ENCODE measurements at regions of chr20 and their contacts with region 1.

Region 1: DNA sequence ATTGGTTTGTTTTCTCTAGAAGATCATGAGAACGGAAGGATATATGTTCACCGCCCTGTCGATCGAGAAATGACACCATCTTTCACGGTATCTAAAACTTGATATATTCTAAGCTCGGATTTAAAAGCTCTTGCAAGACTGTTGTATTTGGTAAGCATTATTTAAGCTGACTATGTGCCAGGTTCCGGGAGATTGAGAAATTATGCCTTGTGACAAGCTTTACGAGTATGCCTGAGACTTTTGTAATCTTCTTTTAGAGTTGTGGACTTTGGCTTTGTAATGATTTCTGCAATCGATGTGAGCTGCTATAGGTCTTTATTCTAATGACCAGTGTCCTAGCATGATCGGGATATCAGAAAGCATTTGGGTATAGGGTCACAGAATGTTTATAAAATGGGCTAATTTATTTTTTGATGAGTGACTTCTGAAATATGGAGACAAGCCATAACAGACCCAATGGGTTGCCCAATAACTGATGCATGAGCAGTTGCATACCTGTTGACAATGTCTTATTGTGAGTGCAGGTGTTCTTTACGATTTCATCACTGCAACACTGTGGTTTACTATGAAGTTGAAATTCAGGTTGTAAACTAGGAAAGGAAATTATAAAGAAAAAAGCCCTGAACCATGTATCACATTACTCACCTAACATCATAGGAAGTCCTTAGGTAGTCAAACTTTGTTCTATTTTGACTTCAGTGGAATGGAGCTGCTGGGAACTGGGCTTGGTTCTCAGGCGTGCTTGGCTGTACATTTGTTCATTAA is 14.0 kb downstream of the CDH26 start:
- DNase-seq: peak; percentile 82
- H3K4me3 Mint-ChIP-seq: peak overlapping the region; percentile 37
- H3K27ac Mint-ChIP-seq: peak overlapping the region; percentile 80
- H3K4me1 Mint-ChIP-seq: peaks cover 20% of the 10 kb centered on the region
- H3K27me3 Mint-ChIP-seq: no peaks in the 10 kb centered on the region
- CTCF ChIP-seq: no peak

Region 2: GRCh38 chr20:59817846-59818615 is 154.2 kb before region 1 on chr20:
- CTCF ChIA-PET with region 1: no interaction called
- POLR2A ChIA-PET with region 1: no interaction called
- intact Hi-C with region 1: no loop called
- DNase-seq: no peak
- H3K4me3 Mint-ChIP-seq: no peak overlapping the region
- H3K27ac Mint-ChIP-seq: no peak overlapping the region
- H3K4me1 Mint-ChIP-seq: peaks cover 24% of the 10 kb centered on the region
- H3K27me3 Mint-ChIP-seq: no peaks in the 10 kb centered on the region
- CTCF ChIP-seq: no peak

Region 3: GRCh38 chr20:59933849-59934596 is 38.2 kb before region 1 on chr20:
- CTCF ChIA-PET with region 1: interaction called, 14 read pairs
- POLR2A ChIA-PET with region 1: interaction called, 47 read pairs
- intact Hi-C with region 1: no loop called
- DNase-seq: peak; percentile 69
- H3K4me3 Mint-ChIP-seq: peak overlapping the region; percentile 70
- H3K27ac Mint-ChIP-seq: no peak overlapping the region
- H3K4me1 Mint-ChIP-seq: peaks cover 16% of the 10 kb centered on the region
- H3K27me3 Mint-ChIP-seq: peaks cover 4% of the 10 kb centered on the region
- CTCF ChIP-seq: peak; percentile 97

Region 4: DNA sequence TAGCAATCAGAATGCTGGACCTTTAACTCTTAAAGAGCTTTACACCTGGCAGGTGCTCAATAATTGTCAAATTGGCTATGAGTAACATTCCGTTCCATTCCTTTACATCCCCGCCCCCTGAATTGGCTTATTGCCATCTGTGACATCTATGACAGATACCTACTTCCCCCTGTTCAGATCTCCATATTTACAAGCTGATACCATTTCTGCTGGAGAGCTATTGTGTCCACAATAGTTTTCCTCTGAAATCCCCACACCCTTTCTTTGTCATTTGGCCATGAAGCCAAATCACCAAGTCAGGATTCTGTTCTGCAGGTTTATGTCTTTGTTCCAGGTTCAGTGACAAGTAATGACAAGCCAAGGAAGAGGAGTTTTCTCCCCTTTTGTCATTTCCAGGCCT is 10.8 kb before region 1 on chr20:
- CTCF ChIA-PET with region 1: interaction called, 11 read pairs
- POLR2A ChIA-PET with region 1: interaction called, 32 read pairs
- intact Hi-C with region 1: no loop called
- DNase-seq: no peak
- H3K4me3 Mint-ChIP-seq: no peak overlapping the region
- H3K27ac Mint-ChIP-seq: no peak overlapping the region
- H3K4me1 Mint-ChIP-seq: peaks cover 12% of the 10 kb centered on the region
- H3K27me3 Mint-ChIP-seq: no peaks in the 10 kb centered on the region
- CTCF ChIP-seq: no peak

Region 5: DNA sequence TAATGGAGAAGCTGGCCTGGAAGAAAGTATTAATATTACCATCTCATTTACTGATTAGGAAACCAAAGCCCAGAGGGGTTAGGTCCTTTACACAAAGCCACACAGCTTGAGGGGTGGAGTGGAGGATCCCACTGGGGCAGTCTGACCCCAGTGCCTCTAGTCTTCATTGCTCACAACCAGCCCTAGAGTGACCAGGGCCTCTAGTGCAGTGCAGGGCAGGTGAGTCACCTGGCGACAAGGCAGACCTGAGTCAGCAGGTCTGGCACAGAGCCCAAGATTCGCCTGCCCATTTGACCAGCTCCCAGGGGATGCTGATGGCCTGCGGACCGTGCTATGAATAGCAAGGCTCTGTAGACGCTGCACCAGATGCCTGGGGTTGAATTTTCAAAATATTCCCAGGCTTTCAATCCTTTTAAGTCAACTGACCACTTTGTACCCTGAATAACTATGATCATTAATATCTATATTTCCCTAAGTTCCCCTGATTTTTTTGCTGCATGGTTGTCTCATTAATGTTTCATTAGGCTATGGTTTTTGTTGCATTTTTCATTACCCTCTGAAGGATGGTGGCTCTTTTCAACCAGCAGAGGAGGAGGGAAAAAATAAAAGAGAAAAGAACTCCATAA is 16.0 kb after region 1 on chr20:
- CTCF ChIA-PET with region 1: interaction called, 4 read pairs
- POLR2A ChIA-PET with region 1: interaction called, 10 read pairs
- intact Hi-C with region 1: no loop called
- DNase-seq: peak; percentile 86
- H3K4me3 Mint-ChIP-seq: no peak overlapping the region
- H3K27ac Mint-ChIP-seq: no peak overlapping the region
- H3K4me1 Mint-ChIP-seq: peaks cover 13% of the 10 kb centered on the region
- H3K27me3 Mint-ChIP-seq: no peaks in the 10 kb centered on the region
- CTCF ChIP-seq: no peak

Region 6: GRCh38 chr20:60040471-60041162 is 68.4 kb after region 1 on chr20:
- CTCF ChIA-PET with region 1: interaction called, 3 read pairs
- POLR2A ChIA-PET with region 1: interaction called, 18 read pairs
- intact Hi-C with region 1: no loop called
- DNase-seq: no peak
- H3K4me3 Mint-ChIP-seq: no peak overlapping the region
- H3K27ac Mint-ChIP-seq: no peak overlapping the region
- H3K4me1 Mint-ChIP-seq: peaks cover 18% of the 10 kb centered on the region
- H3K27me3 Mint-ChIP-seq: no peaks in the 10 kb centered on the region
- CTCF ChIP-seq: no peak

Region 7: GRCh38 chr20:60292001-60292520 is 319.8 kb after region 1 on chr20:
- CTCF ChIA-PET with region 1: no interaction called
- POLR2A ChIA-PET with region 1: no interaction called
- intact Hi-C with region 1: no loop called
- DNase-seq: no peak
- H3K4me3 Mint-ChIP-seq: no peak overlapping the region
- H3K27ac Mint-ChIP-seq: no peak overlapping the region
- H3K4me1 Mint-ChIP-seq: no peaks in the 10 kb centered on the region
- H3K27me3 Mint-ChIP-seq: no peaks in the 10 kb centered on the region
- CTCF ChIP-seq: no peak